HCT116 (cell line): ENCODE measurements at regions of chr1 and their contacts with region 1.

Region 1: GRCh38 chr1:88973520-88974137 is 18.8 kb downstream of the KYAT3 start:
- DNase-seq: peak; percentile 33
- ATAC-seq: peak; percentile 61
- H3K4me3 ChIP-seq: no peak overlapping the region
- H3K27ac ChIP-seq: no peak overlapping the region
- H3K4me1 ChIP-seq: no peaks in the 10 kb centered on the region
- H3K27me3 ChIP-seq: no peaks in the 10 kb centered on the region
- CTCF ChIP-seq: peak; percentile 39 to 72 (median 49); a peak in 4 of 6 replicates
- POLR2A ChIP-seq: no peak
- RAD21 ChIP-seq: peak; percentile 59

Region 2: DNA sequence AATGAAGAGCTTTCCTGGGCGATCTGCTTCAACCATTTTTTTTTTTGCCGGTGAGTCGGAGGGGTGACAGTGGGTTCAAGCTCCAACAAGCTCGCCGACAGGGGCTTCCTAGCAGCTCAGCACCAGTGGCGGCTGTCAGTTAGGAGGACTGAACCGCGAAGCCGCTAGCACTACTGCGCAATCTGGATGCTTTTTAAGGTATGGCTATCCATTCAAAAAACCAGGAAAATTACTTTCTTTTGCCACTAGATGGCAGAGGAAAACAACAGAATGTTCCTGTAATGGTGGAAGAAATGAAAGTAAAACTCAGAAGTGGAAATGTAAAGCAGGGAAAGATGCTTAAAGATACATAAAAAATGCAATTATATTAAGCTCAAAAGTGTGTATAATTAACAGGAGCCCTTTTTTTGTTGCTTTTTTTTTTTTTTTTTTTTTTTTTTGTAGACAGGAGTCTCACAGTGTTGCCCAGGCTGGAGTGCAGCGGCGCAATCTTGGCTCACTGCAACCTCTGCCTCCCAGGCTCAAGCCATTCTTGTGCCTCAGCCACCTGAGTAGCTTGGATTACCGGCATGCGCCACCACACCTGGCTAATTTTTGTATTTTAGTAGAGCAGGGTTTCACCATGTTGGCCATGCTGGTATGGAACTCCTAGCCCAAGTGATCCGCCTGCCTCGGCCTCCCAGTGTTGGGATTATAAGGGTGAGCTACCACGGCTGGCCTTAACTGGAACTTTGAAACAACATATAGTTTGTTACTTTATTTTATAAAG is 10.3 kb after region 1 on chr1:
- CTCF ChIA-PET with region 1: interaction called, 11 read pairs
- POLR2A ChIA-PET with region 1: no interaction called
- RAD21 ChIA-PET with region 1: no interaction called
- intact Hi-C with region 1: no loop called
- DNase-seq: peak; percentile 23
- ATAC-seq: no peak
- H3K4me3 ChIP-seq: no peak overlapping the region
- H3K27ac ChIP-seq: peak overlapping the region; percentile 45; the same call in 1 of the 2 replicates
- H3K4me1 ChIP-seq: peaks cover 25 to 35% of the 10 kb centered on the region in 2 experiments
- H3K27me3 ChIP-seq: no peaks in the 10 kb centered on the region
- CTCF ChIP-seq: peak; percentile 31 to 71 (median 54); a peak in 5 of 6 replicates
- POLR2A ChIP-seq: no peak
- RAD21 ChIP-seq: peak; percentile 65

Region 3: GRCh38 chr1:89358287-89358893 is 384.8 kb after region 1 on chr1:
- CTCF ChIA-PET with region 1: no interaction called
- POLR2A ChIA-PET with region 1: no interaction called
- RAD21 ChIA-PET with region 1: no interaction called
- intact Hi-C with region 1: loop called (anchors 1 kb)
- DNase-seq: peak; percentile 63
- ATAC-seq: peak; percentile 96
- H3K4me3 ChIP-seq: no peak overlapping the region
- H3K27ac ChIP-seq: no peak overlapping the region
- H3K4me1 ChIP-seq: no peaks in the 10 kb centered on the region
- H3K27me3 ChIP-seq: no peaks in the 10 kb centered on the region
- CTCF ChIP-seq: peak; percentile 65 to 90 (median 81)
- POLR2A ChIP-seq: no peak
- RAD21 ChIP-seq: peak; percentile 88

Region 4: DNA sequence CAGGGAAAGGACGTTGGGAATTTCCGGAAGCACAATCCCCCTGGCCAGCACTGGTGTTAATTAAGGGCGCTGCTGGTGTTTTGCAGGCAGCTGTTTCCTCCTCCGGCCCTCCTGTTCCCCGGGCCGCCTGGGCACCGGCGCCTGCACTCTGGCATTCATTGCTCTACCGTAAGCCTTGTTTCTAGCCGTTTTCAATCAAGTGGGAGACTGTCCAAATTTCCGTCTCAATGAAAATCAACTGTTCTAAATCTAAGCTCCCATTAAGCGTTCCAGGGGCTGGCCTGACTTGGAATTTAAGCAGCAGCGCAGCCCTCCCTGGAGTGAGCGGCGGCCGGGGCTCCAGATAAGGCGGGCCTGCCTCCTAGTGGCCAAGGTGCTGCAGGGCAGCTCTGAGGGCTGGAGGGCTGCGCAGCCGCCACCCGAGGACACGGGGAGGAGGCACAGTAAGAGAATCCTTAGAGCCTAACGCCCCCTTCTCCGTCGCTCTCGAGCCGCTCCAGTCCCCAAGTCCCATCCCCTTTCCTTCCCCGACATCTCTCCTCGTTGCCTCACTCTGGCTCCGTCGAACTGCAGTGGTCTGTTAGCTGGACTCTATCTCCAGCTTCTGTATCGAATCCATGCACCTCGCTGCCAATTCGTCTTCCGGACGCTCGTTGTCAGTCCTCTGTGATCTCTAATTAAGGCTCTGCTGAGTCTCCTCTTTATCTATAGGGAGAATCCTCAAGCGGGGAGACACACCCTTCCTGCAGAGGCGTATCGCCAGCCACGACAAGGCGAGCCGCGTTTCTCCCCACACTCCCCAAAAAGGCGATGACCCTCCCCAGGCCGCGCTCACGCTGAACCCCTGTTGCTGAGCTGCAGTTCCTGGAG is 789.4 kb after region 1 on chr1:
- CTCF ChIA-PET with region 1: no interaction called
- POLR2A ChIA-PET with region 1: no interaction called
- RAD21 ChIA-PET with region 1: no interaction called
- intact Hi-C with region 1: loop called (anchors 10 kb)
- DNase-seq: peak; percentile 28
- ATAC-seq: peak; percentile 100
- H3K4me3 ChIP-seq: no peak overlapping the region; a peak in 1 of 4 replicates
- H3K27ac ChIP-seq: no peak overlapping the region
- H3K4me1 ChIP-seq: peaks cover 0 to 8% of the 10 kb centered on the region in 2 experiments; a peak in 1 of 4 replicates
- H3K27me3 ChIP-seq: no peaks in the 10 kb centered on the region
- CTCF ChIP-seq: peak; percentile 88 to 95 (median 94)
- POLR2A ChIP-seq: no peak
- RAD21 ChIP-seq: peak; percentile 95